ENCODE measurements at regions of chr2 and their contacts with region 1.

Region 1: GRCh38 chr2:205675861-205676516 is 6.3 kb upstream of the NRP2 start:
- DNase-seq: no peak
- ATAC-seq: peak; percentile 79

Region 2: GRCh38 chr2:204145263-204145751 is 1530.7 kb before region 1 on chr2:
- intact Hi-C with region 1: loop called in 1 of 2 experiments (anchors 5 kb)
- DNase-seq: peak; percentile 65 to 77
- ATAC-seq: peak; percentile 99

Region 3: DNA sequence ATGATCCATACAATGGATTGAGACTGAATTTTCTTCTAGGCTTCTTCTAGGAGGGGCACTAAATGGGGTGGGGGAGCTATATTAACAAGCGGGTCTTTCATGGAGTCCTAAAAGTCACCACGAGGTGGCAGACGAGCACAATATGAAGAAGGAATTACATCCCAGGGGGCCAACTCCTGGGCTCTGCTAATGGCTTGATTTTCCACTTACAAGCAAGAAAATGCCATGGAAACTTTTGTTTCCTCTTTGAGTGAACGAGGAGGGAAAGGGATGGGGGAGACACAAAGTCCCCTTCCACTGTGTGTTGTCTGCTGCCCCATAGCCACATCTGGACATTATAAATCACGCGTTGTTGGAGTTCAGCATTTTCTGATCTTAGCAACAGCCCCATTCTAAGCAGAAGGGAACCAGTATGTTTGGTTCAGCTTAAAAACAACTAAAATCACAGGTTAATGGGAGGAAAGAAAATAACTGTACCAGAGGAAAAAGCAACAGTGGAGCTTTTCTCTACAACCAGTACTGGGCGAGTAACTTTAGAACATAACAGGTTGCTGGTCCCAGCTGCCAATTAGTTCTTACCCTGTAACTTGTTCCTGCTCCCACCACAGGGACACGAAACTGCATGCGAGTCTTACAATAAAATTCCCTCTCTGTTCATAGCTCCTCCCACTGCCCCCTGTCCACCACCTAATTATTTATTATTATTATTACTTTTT is 1415.7 kb before region 1 on chr2:
- intact Hi-C with region 1: loop called in 1 of 2 experiments (anchors 5 kb)
- DNase-seq: peak; percentile 40 to 71
- ATAC-seq: peak; percentile 68

Region 4: DNA sequence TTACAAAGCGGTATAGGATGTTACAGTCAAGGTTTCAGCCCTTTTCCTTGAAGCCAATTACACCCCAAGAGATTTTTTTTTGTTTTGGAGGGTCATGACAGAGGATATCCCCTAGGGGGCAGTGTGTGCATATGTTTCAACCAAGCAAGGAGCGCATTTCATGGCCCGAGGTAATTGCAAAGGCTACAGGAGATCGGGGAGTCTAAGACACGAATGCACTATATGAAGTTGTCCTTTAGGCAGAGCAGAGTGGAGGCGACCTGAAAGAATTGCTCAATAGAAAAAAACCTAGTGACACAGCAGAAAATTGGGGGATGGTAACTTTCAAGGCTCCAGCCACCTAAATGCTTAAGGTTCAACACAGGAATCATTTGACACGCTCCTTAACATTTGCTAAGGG is 1350.5 kb before region 1 on chr2:
- intact Hi-C with region 1: loop called in 1 of 2 experiments (anchors 5 kb)
- DNase-seq: peak; percentile 37 to 38
- ATAC-seq: peak; percentile 90

Region 5: DNA sequence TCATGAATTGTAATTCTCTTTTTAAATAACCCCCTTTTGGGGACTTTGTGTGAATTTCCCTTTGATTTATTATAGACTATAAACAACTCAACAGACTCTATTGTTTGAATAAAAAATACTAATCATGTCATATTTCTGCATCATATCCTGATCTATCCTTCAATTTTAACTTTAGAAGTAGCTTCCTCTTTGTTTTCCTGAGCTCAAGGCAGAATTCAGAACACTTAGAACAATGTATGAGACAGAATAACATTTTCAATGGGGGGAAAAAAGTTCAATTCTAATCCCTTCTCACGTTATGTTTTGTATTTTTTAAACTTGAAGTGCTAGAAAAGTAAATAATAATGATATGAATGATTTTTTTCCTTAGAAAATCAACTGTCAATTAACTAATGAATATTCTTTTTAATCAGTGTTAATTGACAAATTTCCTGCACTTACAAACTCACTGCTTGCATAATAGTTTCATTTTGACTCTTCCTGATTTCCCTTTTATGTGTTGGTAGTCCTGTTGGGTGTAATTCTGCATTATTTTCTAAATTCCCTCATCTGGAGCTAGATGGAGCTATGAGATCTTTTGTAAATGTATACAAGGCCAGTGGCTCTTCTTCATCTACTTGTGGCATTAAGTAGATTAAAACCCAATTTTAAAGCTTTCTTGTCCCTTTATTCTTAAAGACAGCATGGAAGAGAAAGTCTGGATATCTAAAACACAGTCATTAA is 804.6 kb before region 1 on chr2:
- intact Hi-C with region 1: loop called in 1 of 2 experiments (anchors 10 kb)
- DNase-seq: no peak
- ATAC-seq: peak; percentile 34

Region 6: GRCh38 chr2:205297846-205298245 is 378.1 kb before region 1 on chr2:
- intact Hi-C with region 1: no loop called
- DNase-seq: no peak
- ATAC-seq: no peak